ENCODE measurements at regions of chr1 and their contacts with region 1.

Region 1: GRCh38 chr1:47262787-47263413 is 30.9 kb upstream of the TAL1 start:
- DNase-seq: peak; percentile 46
- H3K4me3 Mint-ChIP-seq: no peak overlapping the region
- H3K27ac Mint-ChIP-seq: no peak overlapping the region
- H3K4me1 Mint-ChIP-seq: no peaks in the 10 kb centered on the region
- H3K27me3 Mint-ChIP-seq: no peaks in the 10 kb centered on the region

Region 2: GRCh38 chr1:47192458-47193384 is 70.2 kb before region 1 on chr1:
- CTCF ChIA-PET with region 1: interaction called, 144 read pairs
- POLR2A ChIA-PET with region 1: no interaction called
- intact Hi-C with region 1: loop called (anchors 1 kb)
- DNase-seq: peak; percentile 78
- H3K4me3 Mint-ChIP-seq: no peak overlapping the region
- H3K27ac Mint-ChIP-seq: no peak overlapping the region
- H3K4me1 Mint-ChIP-seq: peaks cover 3% of the 10 kb centered on the region
- H3K27me3 Mint-ChIP-seq: peaks cover 5% of the 10 kb centered on the region